ENCODE measurements at regions of chr16 and their contacts with region 1.

Region 1: DNA sequence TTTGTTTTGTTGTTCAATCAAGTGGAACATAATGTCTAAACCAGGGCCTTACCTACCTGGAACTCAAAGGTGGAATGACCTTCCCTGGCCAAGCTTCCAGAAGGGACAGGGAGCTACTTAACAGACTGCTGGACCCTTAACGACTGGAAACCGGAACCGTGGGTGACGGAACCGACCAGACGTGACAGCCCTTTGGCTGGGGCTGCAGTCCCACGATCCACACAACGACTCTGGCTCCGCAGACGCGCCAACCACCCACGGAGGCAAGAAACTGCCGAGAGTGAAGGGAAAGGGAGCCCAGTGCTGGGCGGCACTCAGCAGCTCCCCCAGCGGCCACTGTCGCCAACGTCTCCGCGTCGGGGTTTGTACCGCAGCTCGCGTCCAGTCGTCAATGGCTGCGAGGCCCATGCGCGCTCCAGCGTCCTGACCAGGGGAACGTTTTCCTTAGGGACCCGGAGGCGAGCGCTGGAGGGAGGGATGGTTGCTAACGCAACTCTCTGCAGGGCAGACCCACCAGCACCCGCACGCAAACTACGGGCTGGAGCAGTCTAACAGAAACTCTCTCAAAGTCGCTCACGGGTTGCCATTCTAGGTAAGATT is 5.5 kb upstream of the KIF22 start:
- DNase-seq: peak; percentile 80 to 88
- ATAC-seq: peak; percentile 83 to 93 (median 92)
- H3K4me3 ChIP-seq: peak overlapping the region; percentile 57
- H3K27ac ChIP-seq: no peak overlapping the region
- H3K4me1 ChIP-seq: peaks cover 11% of the 10 kb centered on the region
- H3K27me3 ChIP-seq: no peaks in the 10 kb centered on the region
- CTCF ChIP-seq: peak; percentile 85

Region 2: GRCh38 chr16:29745853-29746345 is 39.1 kb before region 1 on chr16 and contains the start of gene C16orf54:
- intact Hi-C with region 1: loop called in 1 of 2 experiments (anchors 5 kb)
- DNase-seq: peak; percentile 54 to 80
- ATAC-seq: peak; percentile 15 to 56 (median 44)
- H3K4me3 ChIP-seq: peak within 1 kb of the TSS; percentile 32
- H3K27ac ChIP-seq: no peak within 1 kb of the TSS
- H3K4me1 ChIP-seq: no peaks in the 10 kb centered on the region
- H3K27me3 ChIP-seq: no peaks in the 10 kb centered on the region
- CTCF ChIP-seq: no peak
- total RNA-seq, gene C16orf54: 0.24 to 0.57 (median 0.46) TPM

Region 3: GRCh38 chr16:29815793-29816693 is 31.0 kb after region 1 on chr16 and contains the start of gene PAGR1:
- intact Hi-C with region 1: loop called in 1 of 2 experiments (anchors 2 kb)
- DNase-seq: peak; percentile 97 to 99
- ATAC-seq: peak; percentile 84 to 87 (median 84)
- H3K4me3 ChIP-seq: peak within 1 kb of the TSS; percentile 90
- H3K27ac ChIP-seq: peak within 1 kb of the TSS; percentile 97
- H3K4me1 ChIP-seq: peaks cover 26% of the 10 kb centered on the region
- H3K27me3 ChIP-seq: no peaks in the 10 kb centered on the region
- CTCF ChIP-seq: peak; percentile 91
- total RNA-seq, gene PAGR1: 9.4 to 14.2 (median 11.0) TPM